OCI-LY7 (cell line): ENCODE measurements at regions of chr7 and their contacts with region 1.

Region 1: DNA sequence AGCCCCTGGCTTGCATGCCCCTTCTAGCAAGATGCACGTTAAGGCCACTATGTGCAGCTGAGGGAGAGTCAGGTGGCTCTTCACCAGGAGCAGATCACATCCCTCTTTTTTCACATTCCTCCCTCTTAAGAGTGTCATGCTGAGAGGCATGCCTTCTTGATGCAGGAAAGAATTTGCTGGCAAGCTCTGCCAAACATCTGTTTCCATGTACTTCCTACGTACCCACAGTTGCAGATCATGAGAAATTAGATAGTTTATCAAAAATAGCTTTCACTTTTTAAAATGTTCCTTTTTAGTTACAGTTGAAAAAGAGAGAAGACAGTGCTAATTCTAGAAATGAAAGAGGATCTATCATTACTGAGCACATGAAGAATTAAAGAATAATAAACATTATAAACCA is 79.7 kb upstream of the ZNF722 start:
- DNase-seq: no peak
- H3K4me3 ChIP-seq: no peak overlapping the region
- H3K27ac ChIP-seq: no peak overlapping the region
- H3K4me1 ChIP-seq: no peaks in the 10 kb centered on the region
- CTCF ChIP-seq: no peak

Region 2: GRCh38 chr7:64599355-64599754 is 680.4 kb after region 1 on chr7:
- CTCF ChIA-PET with region 1: no interaction called
- POLR2A ChIA-PET with region 1: interaction called, 11 read pairs
- intact Hi-C with region 1: no loop called
- DNase-seq: no peak
- H3K4me3 ChIP-seq: no peak overlapping the region
- H3K27ac ChIP-seq: no peak overlapping the region
- H3K4me1 ChIP-seq: no peaks in the 10 kb centered on the region
- CTCF ChIP-seq: peak; percentile 47; the same call in 1 of the 2 replicates